MCF 10A (cell line): ENCODE measurements at regions of chr19 and their contacts with region 1.

Region 1: DNA sequence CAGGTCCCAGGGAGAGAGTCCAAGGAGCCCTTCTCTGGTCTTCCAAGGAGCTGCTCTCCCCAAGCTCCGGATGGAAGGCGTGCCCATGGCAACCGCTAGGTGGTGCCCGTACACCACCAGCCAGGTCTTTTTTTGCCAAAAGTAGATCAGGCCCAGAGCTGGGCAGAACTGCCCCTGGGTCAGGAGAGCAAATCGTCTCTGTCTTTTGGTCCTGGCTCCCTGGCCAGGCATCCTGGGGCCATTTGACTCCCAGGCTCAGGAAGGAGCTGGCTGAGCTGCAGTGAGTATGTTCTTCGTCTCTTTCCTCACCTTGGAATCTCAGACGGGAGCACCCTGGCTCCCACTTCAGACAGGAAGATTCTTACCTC is 24.6 kb upstream of the BCL3 start:
- DNase-seq: peak; percentile 90
- H3K4me3 Mint-ChIP-seq: no peak overlapping the region
- H3K27ac Mint-ChIP-seq: no peak overlapping the region
- H3K4me1 Mint-ChIP-seq: peaks cover 10% of the 10 kb centered on the region
- H3K27me3 Mint-ChIP-seq: no peaks in the 10 kb centered on the region
- CTCF ChIP-seq: peak; percentile 97

Region 2: GRCh38 chr19:44587963-44588770 is 135.8 kb before region 1 on chr19:
- CTCF ChIA-PET with region 1: interaction called, 6 read pairs
- POLR2A ChIA-PET with region 1: no interaction called
- intact Hi-C with region 1: loop called (anchors 1 kb)
- DNase-seq: peak; percentile 88
- H3K4me3 Mint-ChIP-seq: peak overlapping the region; percentile 21
- H3K27ac Mint-ChIP-seq: peak overlapping the region; percentile 99
- H3K4me1 Mint-ChIP-seq: peaks cover 25% of the 10 kb centered on the region
- H3K27me3 Mint-ChIP-seq: no peaks in the 10 kb centered on the region
- CTCF ChIP-seq: peak; percentile 52

Region 3: DNA sequence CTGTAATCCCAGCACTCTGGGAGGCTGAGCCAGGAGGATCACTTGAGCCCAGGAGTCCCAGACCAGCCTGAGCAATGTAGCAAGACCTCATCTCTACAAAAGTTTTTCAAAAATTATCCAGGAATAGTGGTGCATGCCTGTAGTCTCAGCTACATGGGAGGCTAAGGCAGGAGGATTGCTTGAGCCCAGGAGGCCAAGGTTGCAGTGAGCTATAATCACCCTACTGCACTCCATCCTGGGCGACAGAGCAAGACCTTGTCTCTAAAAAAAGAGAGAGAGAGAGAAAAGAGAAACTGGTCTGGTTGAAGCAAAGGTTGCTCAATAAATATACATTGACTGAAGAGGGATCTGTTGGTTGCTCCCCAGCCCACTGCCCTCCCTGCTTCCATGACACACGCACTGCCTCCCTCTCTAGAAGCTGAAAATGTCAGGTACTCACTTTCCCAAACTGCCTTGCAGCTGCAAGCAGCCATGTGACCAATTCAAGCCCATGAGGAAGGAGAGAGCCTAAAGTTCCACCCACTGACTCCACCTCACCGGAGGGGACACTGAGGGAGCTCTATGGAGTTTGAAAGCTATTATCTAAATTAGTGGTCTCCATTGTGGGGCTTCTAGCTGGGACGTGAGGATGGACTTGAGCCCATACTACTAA is 10.9 kb before region 1 on chr19:
- CTCF ChIA-PET with region 1: interaction called, 39 read pairs
- POLR2A ChIA-PET with region 1: interaction called, 3 read pairs
- intact Hi-C with region 1: no loop called
- DNase-seq: no peak
- H3K4me3 Mint-ChIP-seq: no peak overlapping the region
- H3K27ac Mint-ChIP-seq: no peak overlapping the region
- H3K4me1 Mint-ChIP-seq: no peaks in the 10 kb centered on the region
- H3K27me3 Mint-ChIP-seq: no peaks in the 10 kb centered on the region
- CTCF ChIP-seq: no peak

Region 4: GRCh38 chr19:44746946-44747738 is 23.2 kb after region 1 on chr19:
- CTCF ChIA-PET with region 1: interaction called, 30 read pairs
- POLR2A ChIA-PET with region 1: interaction called, 12 read pairs
- intact Hi-C with region 1: no loop called
- DNase-seq: peak; percentile 98
- H3K4me3 Mint-ChIP-seq: peak overlapping the region; percentile 83
- H3K27ac Mint-ChIP-seq: no peak overlapping the region
- H3K4me1 Mint-ChIP-seq: peaks cover 58% of the 10 kb centered on the region
- H3K27me3 Mint-ChIP-seq: no peaks in the 10 kb centered on the region
- CTCF ChIP-seq: no peak

Region 5: GRCh38 chr19:44770550-44771257 is 46.8 kb after region 1 on chr19:
- CTCF ChIA-PET with region 1: interaction called, 414 read pairs
- POLR2A ChIA-PET with region 1: interaction called, 61 read pairs
- intact Hi-C with region 1: loop called (anchors 1 kb)
- DNase-seq: peak; percentile 99
- H3K4me3 Mint-ChIP-seq: peak overlapping the region; percentile 41
- H3K27ac Mint-ChIP-seq: no peak overlapping the region
- H3K4me1 Mint-ChIP-seq: peaks cover 24% of the 10 kb centered on the region
- H3K27me3 Mint-ChIP-seq: no peaks in the 10 kb centered on the region
- CTCF ChIP-seq: peak; percentile 77

Region 6: DNA sequence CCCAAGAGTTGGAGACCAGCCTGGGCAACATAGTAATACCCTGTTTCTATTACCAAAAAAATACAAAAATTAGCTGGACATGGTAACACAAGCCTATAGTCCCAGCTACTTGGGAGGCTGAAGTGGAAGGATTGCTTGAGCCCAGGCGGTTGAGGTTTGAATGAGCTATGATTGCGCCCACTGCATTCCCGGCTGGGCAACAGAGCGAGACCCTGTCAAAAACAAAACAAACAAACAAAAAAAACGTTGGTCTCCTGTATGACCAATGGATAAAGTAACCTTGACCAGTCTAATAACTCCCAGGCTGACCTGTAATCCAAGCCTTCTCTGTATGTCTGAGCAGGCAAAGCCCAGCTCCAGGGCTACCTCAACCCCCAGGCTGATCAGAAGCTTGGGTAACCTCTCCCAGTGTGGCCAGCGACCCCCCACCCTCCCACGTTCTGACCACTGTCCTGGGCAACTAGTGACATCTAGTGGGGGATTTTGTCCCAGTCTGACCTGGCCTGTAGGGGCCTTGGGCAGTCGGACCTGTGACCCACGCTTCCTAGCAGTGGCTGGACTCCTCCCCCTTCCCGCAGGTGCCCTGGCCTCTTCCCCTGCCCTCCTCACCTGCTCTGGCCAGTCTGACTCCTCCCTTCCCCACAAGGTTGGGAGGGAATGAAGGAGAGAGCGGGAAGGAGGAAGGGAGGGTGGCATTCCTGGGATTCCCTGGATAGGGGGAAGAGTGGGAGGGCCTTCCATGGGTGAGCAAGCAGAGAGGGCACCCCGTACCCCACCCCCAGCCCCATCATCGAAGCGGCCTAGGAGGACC is 83.9 kb after region 1 on chr19:
- CTCF ChIA-PET with region 1: interaction called, 10 read pairs
- POLR2A ChIA-PET with region 1: no interaction called
- intact Hi-C with region 1: no loop called
- DNase-seq: peak; percentile 48
- H3K4me3 Mint-ChIP-seq: peak overlapping the region; percentile 53
- H3K27ac Mint-ChIP-seq: no peak overlapping the region
- H3K4me1 Mint-ChIP-seq: peaks cover 17% of the 10 kb centered on the region
- H3K27me3 Mint-ChIP-seq: no peaks in the 10 kb centered on the region
- CTCF ChIP-seq: peak; percentile 35